ENCODE measurements at regions of chr19 and their contacts with region 1.

Region 1: DNA sequence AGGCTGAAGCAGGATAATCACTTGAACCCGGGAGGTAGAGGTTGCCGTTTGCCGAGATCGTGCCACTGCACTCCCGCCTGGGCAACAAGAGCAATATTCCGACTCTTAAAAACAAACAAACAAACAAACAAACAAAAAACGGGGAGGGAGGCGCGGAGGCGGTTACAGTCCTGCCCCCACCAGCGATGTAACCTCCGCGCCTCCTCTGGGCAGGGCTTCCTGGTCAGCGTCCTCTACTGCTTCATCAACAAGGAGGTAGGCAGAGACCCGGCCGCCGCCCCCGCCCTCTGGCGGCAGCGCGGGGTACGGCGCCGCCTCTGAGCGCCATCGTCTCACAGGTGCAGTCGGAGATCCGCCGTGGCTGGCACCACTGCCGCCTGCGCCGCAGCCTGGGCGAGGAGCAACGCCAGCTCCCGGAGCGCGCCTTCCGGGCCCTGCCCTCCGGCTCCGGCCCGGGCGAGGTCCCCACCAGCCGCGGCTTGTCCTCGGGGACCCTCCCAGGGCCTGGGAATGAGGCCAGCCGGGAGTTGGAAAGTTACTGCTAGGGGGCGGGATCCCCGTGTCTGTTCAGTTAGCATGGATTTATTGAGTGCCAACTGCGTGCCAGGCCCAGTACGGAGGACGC is 10.2 kb downstream of the SNRPD2 start:
- DNase-seq: peak; percentile 77 to 88 (median 83)
- H3K4me3 ChIP-seq: peak overlapping the region; percentile 46
- H3K4me3 Mint-ChIP-seq: peak overlapping the region; percentile 79 to 89 (median 84)
- H3K27ac ChIP-seq: no peak overlapping the region
- H3K27ac Mint-ChIP-seq: peak overlapping the region in 7 of 8 donors; percentile 66 to 92 (median 80)
- H3K4me1 ChIP-seq: peaks cover 18% of the 10 kb centered on the region
- H3K4me1 Mint-ChIP-seq: peaks cover 13 to 24% (median 19%) of the 10 kb centered on the region in 3 donors
- H3K27me3 ChIP-seq: no peaks in the 10 kb centered on the region
- H3K27me3 Mint-ChIP-seq: no peaks in the 10 kb centered on the region

Region 2: DNA sequence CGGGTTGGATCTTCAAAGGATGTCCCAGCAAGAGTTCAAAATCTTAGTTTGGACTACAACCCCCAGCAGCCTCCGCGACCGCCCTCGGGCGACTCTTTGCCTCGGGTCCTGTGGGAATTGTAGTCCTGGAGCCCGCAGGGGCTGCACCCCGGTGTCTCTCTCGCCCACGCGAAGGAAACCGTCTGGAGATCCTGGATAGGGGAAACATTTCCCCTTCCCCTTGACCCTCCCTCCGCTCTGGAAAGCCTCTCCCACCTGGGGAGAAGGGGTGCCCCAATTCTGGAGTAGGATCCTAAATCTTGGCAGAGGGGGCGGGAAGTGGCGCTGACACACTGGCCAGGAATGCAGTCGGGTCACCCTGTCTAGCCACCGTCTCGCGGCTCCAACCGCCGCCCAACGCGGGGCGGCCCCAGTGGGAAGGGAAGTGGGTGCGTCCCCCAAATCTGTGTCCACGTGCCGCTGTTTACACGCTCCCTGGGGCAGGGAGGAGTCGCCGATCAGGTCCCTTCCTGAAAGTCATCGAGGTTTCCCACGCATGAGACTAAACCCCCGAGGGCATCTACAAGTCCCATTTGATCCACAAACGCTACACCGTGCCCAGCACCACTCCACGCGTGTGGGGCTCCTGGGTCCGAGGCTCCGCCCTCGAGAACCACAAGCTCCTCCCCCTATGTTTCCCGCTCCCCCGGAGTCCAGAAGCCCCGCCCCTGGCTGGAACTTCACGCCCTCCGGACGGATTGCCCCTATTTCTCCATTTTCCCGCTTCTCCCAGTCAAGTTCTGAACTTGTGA is 275.9 kb before region 1 on chr19:
- CTCF ChIA-PET with region 1: no interaction called
- POLR2A ChIA-PET with region 1: no interaction called
- DNase-seq: peak; percentile 73 to 87 (median 80)
- H3K4me3 ChIP-seq: peak overlapping the region; percentile 64
- H3K4me3 Mint-ChIP-seq: peak overlapping the region; percentile 85 to 97 (median 96)
- H3K27ac ChIP-seq: peak overlapping the region; percentile 86
- H3K27ac Mint-ChIP-seq: peak overlapping the region; percentile 82 to 98 (median 94)
- H3K4me1 ChIP-seq: peaks cover 26% of the 10 kb centered on the region
- H3K4me1 Mint-ChIP-seq: peaks cover 25 to 45% (median 32%) of the 10 kb centered on the region in 3 donors
- H3K27me3 ChIP-seq: peaks cover 26% of the 10 kb centered on the region
- H3K27me3 Mint-ChIP-seq: peaks cover 30 to 33% of the 10 kb centered on the region in 2 donors

Region 3: DNA sequence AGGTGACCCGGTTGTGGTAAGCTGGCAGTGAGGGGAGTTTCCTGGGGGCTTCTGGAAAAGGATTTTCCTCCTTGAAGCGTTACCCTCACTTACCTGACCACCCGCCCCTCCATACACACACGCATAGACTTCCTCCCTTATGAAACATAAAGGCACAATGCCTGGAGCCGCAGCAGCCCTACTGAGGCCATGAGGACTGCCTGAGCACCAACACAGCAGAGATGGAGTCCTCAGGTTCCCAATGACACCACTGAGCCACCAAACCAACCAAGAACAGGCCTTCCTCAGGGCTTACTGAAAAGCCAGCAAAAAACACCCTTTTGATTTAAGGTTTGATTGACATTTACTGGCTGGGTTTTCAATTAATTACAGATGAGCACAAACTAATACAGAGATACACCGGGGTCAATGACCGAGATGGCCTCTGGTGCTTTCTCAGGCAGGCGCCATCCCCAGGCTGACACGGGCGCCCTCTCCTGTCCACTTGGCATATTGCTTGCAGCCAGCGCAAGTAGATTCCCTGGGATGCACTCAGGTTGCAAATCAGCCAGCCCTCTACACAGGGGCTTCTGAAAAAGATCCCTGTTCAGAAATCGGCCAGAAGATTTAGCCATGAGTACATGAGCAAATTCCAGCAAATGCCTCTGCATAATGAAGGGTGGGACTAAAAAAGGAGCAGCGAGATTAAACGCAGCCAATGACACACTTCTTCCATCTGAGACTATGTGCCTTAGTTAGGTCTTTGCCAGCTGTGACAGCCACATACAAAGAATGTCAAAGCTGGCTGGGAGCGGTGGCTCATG is 111.7 kb before region 1 on chr19:
- CTCF ChIA-PET with region 1: no interaction called
- POLR2A ChIA-PET with region 1: no interaction called
- DNase-seq: peak; percentile 25 to 59 (median 41)
- H3K4me3 ChIP-seq: no peak overlapping the region
- H3K4me3 Mint-ChIP-seq: peak overlapping the region in 1 of 7 donors; percentile 51
- H3K27ac ChIP-seq: no peak overlapping the region
- H3K27ac Mint-ChIP-seq: peak overlapping the region in 3 of 8 donors; percentile 1 to 77 (median 55)
- H3K4me1 ChIP-seq: no peaks in the 10 kb centered on the region
- H3K4me1 Mint-ChIP-seq: peaks cover 7 to 9% (median 7%) of the 10 kb centered on the region in 3 donors
- H3K27me3 ChIP-seq: no peaks in the 10 kb centered on the region
- H3K27me3 Mint-ChIP-seq: no peaks in the 10 kb centered on the region

Region 4: GRCh38 chr19:45670670-45671453 is 10.6 kb before region 1 on chr19:
- CTCF ChIA-PET with region 1: interaction called, 12 read pairs
- POLR2A ChIA-PET with region 1: interaction called, 5 read pairs
- DNase-seq: peak; percentile 24 to 61 (median 41)
- H3K4me3 ChIP-seq: no peak overlapping the region
- H3K4me3 Mint-ChIP-seq: peak overlapping the region in 6 of 7 donors; percentile 19 to 65 (median 32)
- H3K27ac ChIP-seq: peak overlapping the region; percentile 24
- H3K27ac Mint-ChIP-seq: peak overlapping the region in 1 of 8 donors; percentile 17
- H3K4me1 ChIP-seq: peaks cover 20% of the 10 kb centered on the region
- H3K4me1 Mint-ChIP-seq: peaks cover 24 to 39% (median 27%) of the 10 kb centered on the region in 3 donors
- H3K27me3 ChIP-seq: no peaks in the 10 kb centered on the region
- H3K27me3 Mint-ChIP-seq: peaks cover 0 to 12% of the 10 kb centered on the region in 2 donors

Region 5: GRCh38 chr19:45692187-45693105 is 10.9 kb after region 1 on chr19 and contains the start of gene QPCTL:
- CTCF ChIA-PET with region 1: interaction called, 107 read pairs
- POLR2A ChIA-PET with region 1: interaction called, 12 read pairs
- DNase-seq: peak; percentile 94 to 98 (median 98)
- H3K4me3 ChIP-seq: peak within 1 kb of the TSS; percentile 72
- H3K4me3 Mint-ChIP-seq: peak within 1 kb of the TSS; percentile 91 to 98 (median 93)
- H3K27ac ChIP-seq: peak within 1 kb of the TSS; percentile 92
- H3K27ac Mint-ChIP-seq: peak within 1 kb of the TSS; percentile 92 to 100 (median 97)
- H3K4me1 ChIP-seq: peaks cover 7% of the 10 kb centered on the region
- H3K4me1 Mint-ChIP-seq: peaks cover 16 to 27% (median 19%) of the 10 kb centered on the region in 3 donors
- H3K27me3 ChIP-seq: no peaks in the 10 kb centered on the region
- H3K27me3 Mint-ChIP-seq: no peaks in the 10 kb centered on the region
- total RNA-seq, gene QPCTL: 11.3 to 11.5 TPM

Region 6: GRCh38 chr19:45792470-45793177 is 111.1 kb after region 1 on chr19 and contains the start of gene DMWD:
- CTCF ChIA-PET with region 1: no interaction called
- POLR2A ChIA-PET with region 1: interaction called, 11 read pairs
- DNase-seq: peak; percentile 98 to 100 (median 100)
- H3K4me3 ChIP-seq: peak within 1 kb of the TSS; percentile 68
- H3K4me3 Mint-ChIP-seq: peak within 1 kb of the TSS; percentile 82 to 96 (median 89)
- H3K27ac ChIP-seq: peak within 1 kb of the TSS; percentile 61
- H3K27ac Mint-ChIP-seq: peak within 1 kb of the TSS; percentile 39 to 97 (median 92)
- H3K4me1 ChIP-seq: peaks cover 30% of the 10 kb centered on the region
- H3K4me1 Mint-ChIP-seq: peaks cover 41 to 52% (median 45%) of the 10 kb centered on the region in 3 donors
- H3K27me3 ChIP-seq: peaks cover 11% of the 10 kb centered on the region
- H3K27me3 Mint-ChIP-seq: peaks cover 0 to 23% of the 10 kb centered on the region in 2 donors
- total RNA-seq, gene DMWD: 57.6 to 62.9 TPM